Caco-2 (cell line): ENCODE measurements at regions of chr17 and their contacts with region 1.

Region 1: DNA sequence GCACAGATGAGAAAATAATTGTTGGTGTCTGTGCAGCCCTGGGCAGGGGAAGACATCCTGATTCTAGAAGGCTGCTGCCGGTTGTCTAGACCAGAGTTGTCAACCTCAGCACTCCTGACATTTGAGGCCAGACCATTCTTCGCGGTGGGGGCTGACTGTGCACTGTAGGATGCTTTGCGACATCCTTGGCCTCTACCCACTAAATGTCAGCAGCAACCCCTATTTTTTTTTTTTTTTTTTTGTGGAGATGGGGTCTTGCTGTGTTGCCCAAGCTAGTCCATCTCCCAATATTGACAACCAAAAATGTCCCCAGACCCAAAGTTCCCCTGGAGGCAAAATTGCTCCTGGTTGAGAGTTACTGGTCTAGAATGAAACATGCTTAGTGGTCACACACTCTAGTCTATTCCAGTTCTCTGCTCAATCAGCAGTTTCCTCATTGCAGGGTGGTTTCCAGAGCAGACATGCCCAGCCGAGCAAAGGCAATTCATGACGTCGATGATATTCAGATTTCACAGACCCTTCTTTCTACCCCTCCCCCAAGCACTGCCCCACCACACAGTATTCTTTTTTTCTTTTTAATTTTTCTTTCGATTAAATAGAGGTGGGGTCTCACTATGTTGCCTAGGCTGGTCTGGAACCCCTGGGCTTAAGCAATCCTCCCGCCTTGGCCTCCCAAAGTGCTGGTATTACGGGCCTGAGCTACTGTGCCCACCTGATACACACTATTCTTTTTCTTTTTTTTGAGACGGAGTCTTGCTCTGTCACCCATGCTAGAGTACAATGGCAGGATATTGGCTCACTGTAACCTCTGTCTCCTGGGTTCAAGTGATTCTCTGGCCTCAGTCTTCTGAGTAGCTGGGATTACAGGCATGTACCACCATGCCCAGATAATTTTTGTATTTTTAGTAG is 9.0 kb downstream of the C17orf99 start:
- DNase-seq: no peak
- H3K4me3 ChIP-seq: no peak overlapping the region
- H3K4me3 Mint-ChIP-seq: no peak overlapping the region
- H3K27ac Mint-ChIP-seq: no peak overlapping the region
- H3K4me1 ChIP-seq: peaks cover 25% of the 10 kb centered on the region
- H3K4me1 Mint-ChIP-seq: peaks cover 11% of the 10 kb centered on the region
- H3K27me3 ChIP-seq: no peaks in the 10 kb centered on the region
- H3K27me3 Mint-ChIP-seq: no peaks in the 10 kb centered on the region
- CTCF ChIP-seq: no peak

Region 2: GRCh38 chr17:77894126-77894985 is 260.8 kb before region 1 on chr17:
- CTCF ChIA-PET with region 1: interaction called, 10 read pairs
- POLR2A ChIA-PET with region 1: no interaction called
- intact Hi-C with region 1: no loop called
- DNase-seq: no peak
- H3K4me3 ChIP-seq: no peak overlapping the region
- H3K4me3 Mint-ChIP-seq: no peak overlapping the region
- H3K27ac Mint-ChIP-seq: no peak overlapping the region
- H3K4me1 ChIP-seq: no peaks in the 10 kb centered on the region
- H3K4me1 Mint-ChIP-seq: no peaks in the 10 kb centered on the region
- H3K27me3 ChIP-seq: no peaks in the 10 kb centered on the region; the same call in 1 of the 2 replicates
- H3K27me3 Mint-ChIP-seq: peaks cover 17% of the 10 kb centered on the region
- CTCF ChIP-seq: no peak

Region 3: GRCh38 chr17:78140169-78140976 is 14.8 kb before region 1 on chr17:
- CTCF ChIA-PET with region 1: interaction called, 4 read pairs
- POLR2A ChIA-PET with region 1: interaction called, 4 read pairs
- intact Hi-C with region 1: loop called (anchors 1 kb)
- DNase-seq: peak; percentile 93 to 98
- H3K4me3 ChIP-seq: no peak overlapping the region
- H3K4me3 Mint-ChIP-seq: no peak overlapping the region
- H3K27ac Mint-ChIP-seq: peak overlapping the region; percentile 83
- H3K4me1 ChIP-seq: peaks cover 30% of the 10 kb centered on the region
- H3K4me1 Mint-ChIP-seq: peaks cover 5% of the 10 kb centered on the region
- H3K27me3 ChIP-seq: no peaks in the 10 kb centered on the region
- H3K27me3 Mint-ChIP-seq: no peaks in the 10 kb centered on the region
- CTCF ChIP-seq: no peak

Region 4: GRCh38 chr17:78289802-78290363 is 134.7 kb after region 1 on chr17:
- CTCF ChIA-PET with region 1: no interaction called
- POLR2A ChIA-PET with region 1: no interaction called
- intact Hi-C with region 1: no loop called
- DNase-seq: peak; percentile 81 to 85
- H3K4me3 ChIP-seq: no peak overlapping the region
- H3K4me3 Mint-ChIP-seq: no peak overlapping the region
- H3K27ac Mint-ChIP-seq: no peak overlapping the region
- H3K4me1 ChIP-seq: peaks cover 5% of the 10 kb centered on the region; the same call in 1 of the 2 replicates
- H3K4me1 Mint-ChIP-seq: no peaks in the 10 kb centered on the region
- H3K27me3 ChIP-seq: no peaks in the 10 kb centered on the region
- H3K27me3 Mint-ChIP-seq: no peaks in the 10 kb centered on the region
- CTCF ChIP-seq: peak; percentile 67 to 83